IMR-90 (cell line): ENCODE measurements at regions of chr10 and their contacts with region 1.

Region 1: GRCh38 chr10:100009793-100010676 is at the start of gene DNMBP:
- DNase-seq: peak; percentile 79
- ATAC-seq: peak; percentile 83
- H3K4me3 ChIP-seq: peak within 1 kb of the TSS; percentile 70
- H3K27ac ChIP-seq: peak within 1 kb of the TSS; percentile 66
- H3K4me1 ChIP-seq: peaks cover 13% of the 10 kb centered on the region
- H3K27me3 ChIP-seq: no peaks in the 10 kb centered on the region
- CTCF ChIP-seq: peak; percentile 64
- POLR2A ChIP-seq: 0 out of 2 replicates have a peak, but pooled peaks have one; percentile 26
- RAD21 ChIP-seq: peak; percentile 44
- total RNA-seq, gene DNMBP: 10.9 and 13.6 TPM in 2 replicates

Region 2: GRCh38 chr10:99845837-99846382 is 164.1 kb before region 1 on chr10:
- CTCF ChIA-PET with region 1: interaction called, 4 read pairs
- POLR2A ChIA-PET with region 1: no interaction called
- dilution Hi-C with region 1: no loop called
- in situ Hi-C with region 1: no loop called
- intact Hi-C with region 1: loop called (anchors 5 kb)
- DNase-seq: peak; percentile 94
- ATAC-seq: peak; percentile 94
- H3K4me3 ChIP-seq: no peak overlapping the region
- H3K27ac ChIP-seq: no peak overlapping the region
- H3K4me1 ChIP-seq: no peaks in the 10 kb centered on the region
- H3K27me3 ChIP-seq: no peaks in the 10 kb centered on the region
- CTCF ChIP-seq: peak; percentile 96
- POLR2A ChIP-seq: no peak
- RAD21 ChIP-seq: peak; percentile 93

Region 3: DNA sequence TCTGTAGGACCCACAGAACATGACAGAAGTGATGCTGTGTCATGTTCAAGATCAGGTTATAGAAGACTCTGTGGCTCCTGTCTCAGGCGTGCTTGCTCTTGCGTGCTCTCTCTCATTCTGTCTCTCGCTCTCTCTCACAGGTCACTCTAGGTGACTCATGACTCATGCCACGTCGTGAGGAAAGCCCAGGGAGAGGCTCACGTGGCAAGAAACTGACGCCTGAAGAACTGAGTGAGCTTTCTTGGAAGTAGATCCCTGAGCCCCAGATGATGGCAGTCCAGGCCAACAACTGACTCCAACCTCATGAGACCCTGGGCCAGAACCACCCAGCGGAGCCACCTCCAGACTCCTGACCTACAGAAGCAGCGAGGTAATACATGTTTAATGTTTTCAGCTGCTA is 103.6 kb before region 1 on chr10:
- CTCF ChIA-PET with region 1: no interaction called
- POLR2A ChIA-PET with region 1: no interaction called
- dilution Hi-C with region 1: no loop called
- in situ Hi-C with region 1: no loop called
- intact Hi-C with region 1: loop called (anchors 2 kb)
- DNase-seq: peak; percentile 96
- ATAC-seq: peak; percentile 85
- H3K4me3 ChIP-seq: no peak overlapping the region
- H3K27ac ChIP-seq: peak overlapping the region; percentile 23; the same call in 1 of the 2 replicates
- H3K4me1 ChIP-seq: peaks cover 7% of the 10 kb centered on the region; the same call in 1 of the 2 replicates
- H3K27me3 ChIP-seq: no peaks in the 10 kb centered on the region
- CTCF ChIP-seq: peak; percentile 51
- POLR2A ChIP-seq: no peak
- RAD21 ChIP-seq: peak; percentile 60

Region 4: DNA sequence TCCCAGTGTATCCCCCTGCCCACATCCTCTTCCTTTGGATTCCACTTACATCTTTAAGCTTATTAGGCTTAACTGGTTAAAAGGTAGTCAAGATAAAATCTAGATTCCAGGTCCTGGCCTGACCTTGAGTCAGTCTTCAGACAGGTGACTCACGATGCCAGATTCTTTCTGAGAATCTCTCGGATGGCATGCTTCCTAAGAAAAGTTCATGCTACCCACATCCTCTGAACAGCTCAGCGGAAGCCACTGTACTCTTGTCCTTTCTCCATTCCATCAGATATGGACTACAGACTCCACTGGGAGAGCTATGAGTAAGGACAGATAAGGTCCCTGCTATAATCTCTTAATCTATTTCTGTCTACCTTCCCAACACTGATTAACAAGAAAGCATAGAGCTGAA is 43.7 kb before region 1 on chr10:
- CTCF ChIA-PET with region 1: interaction called, 11 read pairs
- POLR2A ChIA-PET with region 1: no interaction called
- dilution Hi-C with region 1: no loop called
- in situ Hi-C with region 1: no loop called
- intact Hi-C with region 1: loop called (anchors 5 kb)
- DNase-seq: peak; percentile 78
- ATAC-seq: peak; percentile 66
- H3K4me3 ChIP-seq: no peak overlapping the region
- H3K27ac ChIP-seq: no peak overlapping the region
- H3K4me1 ChIP-seq: peaks cover 5% of the 10 kb centered on the region
- H3K27me3 ChIP-seq: no peaks in the 10 kb centered on the region
- CTCF ChIP-seq: no peak
- POLR2A ChIP-seq: no peak
- RAD21 ChIP-seq: no peak

Region 5: GRCh38 chr10:99976886-99977665 is 33.0 kb before region 1 on chr10:
- CTCF ChIA-PET with region 1: interaction called, 13 read pairs
- POLR2A ChIA-PET with region 1: interaction called, 4 read pairs
- dilution Hi-C with region 1: no loop called
- in situ Hi-C with region 1: no loop called
- intact Hi-C with region 1: loop called (anchors 2 kb)
- DNase-seq: peak; percentile 92
- ATAC-seq: peak; percentile 94
- H3K4me3 ChIP-seq: no peak overlapping the region
- H3K27ac ChIP-seq: 0 out of 2 replicates have a peak overlapping the region, but pooled peaks have one; percentile 30
- H3K4me1 ChIP-seq: peaks cover 14% of the 10 kb centered on the region
- H3K27me3 ChIP-seq: no peaks in the 10 kb centered on the region
- CTCF ChIP-seq: no peak
- POLR2A ChIP-seq: no peak
- RAD21 ChIP-seq: 0 out of 2 replicates have a peak, but pooled peaks have one; percentile 17

Region 6: GRCh38 chr10:100114976-100115770 is 105.1 kb after region 1 on chr10:
- CTCF ChIA-PET with region 1: no interaction called
- POLR2A ChIA-PET with region 1: no interaction called
- dilution Hi-C with region 1: no loop called
- in situ Hi-C with region 1: no loop called
- intact Hi-C with region 1: no loop called
- DNase-seq: no peak
- ATAC-seq: peak; percentile 42
- H3K4me3 ChIP-seq: no peak overlapping the region
- H3K27ac ChIP-seq: no peak overlapping the region
- H3K4me1 ChIP-seq: no peaks in the 10 kb centered on the region
- H3K27me3 ChIP-seq: peaks cover 28% of the 10 kb centered on the region
- CTCF ChIP-seq: no peak
- POLR2A ChIP-seq: no peak
- RAD21 ChIP-seq: no peak

Region 7: GRCh38 chr10:100167553-100168312 is 157.7 kb after region 1 on chr10:
- CTCF ChIA-PET with region 1: no interaction called
- POLR2A ChIA-PET with region 1: no interaction called
- dilution Hi-C with region 1: no loop called
- in situ Hi-C with region 1: no loop called
- intact Hi-C with region 1: no loop called
- DNase-seq: no peak
- ATAC-seq: no peak
- H3K4me3 ChIP-seq: no peak overlapping the region
- H3K27ac ChIP-seq: no peak overlapping the region
- H3K4me1 ChIP-seq: no peaks in the 10 kb centered on the region
- H3K27me3 ChIP-seq: no peaks in the 10 kb centered on the region
- CTCF ChIP-seq: no peak
- POLR2A ChIP-seq: no peak
- RAD21 ChIP-seq: no peak